Left lung (tissue), 14 donors: ENCODE measurements at regions of chr3 and their contacts with region 1.

Region 1: GRCh38 chr3:177050501-177051237 is 146.6 kb downstream of the TBL1XR1 start:
- DNase-seq: peak in 1 of 4 donors; percentile 61
- ATAC-seq: peak; percentile 84
- H3K4me3 ChIP-seq: no peak overlapping the region
- H3K27ac ChIP-seq: no peak overlapping the region
- H3K4me1 ChIP-seq: peaks cover 0 to 14% of the 10 kb centered on the region in 2 donors
- H3K27me3 ChIP-seq: no peaks in the 10 kb centered on the region
- CTCF ChIP-seq: peak; percentile 40 to 47

Region 2: GRCh38 chr3:176920766-176921160 is 129.9 kb before region 1 on chr3:
- intact Hi-C with region 1: no loop called
- DNase-seq: no peak
- ATAC-seq: peak; percentile 74
- H3K4me3 ChIP-seq: no peak overlapping the region
- H3K27ac ChIP-seq: no peak overlapping the region
- H3K4me1 ChIP-seq: no peaks in the 10 kb centered on the region
- H3K27me3 ChIP-seq: no peaks in the 10 kb centered on the region
- CTCF ChIP-seq: no peak

Region 3: GRCh38 chr3:177197041-177197727 is 146.5 kb after region 1 on chr3 and contains the start of gene TBL1XR1:
- intact Hi-C with region 1: loop called in 1 of 2 experiments (anchors 10 kb)
- DNase-seq: peak; percentile 92 to 96 (median 94)
- ATAC-seq: peak; percentile 76
- H3K4me3 ChIP-seq: peak within 1 kb of the TSS; percentile 72 to 74
- H3K27ac ChIP-seq: peak within 1 kb of the TSS; percentile 95 to 96
- H3K4me1 ChIP-seq: peaks cover 3 to 48% of the 10 kb centered on the region in 2 donors
- H3K27me3 ChIP-seq: no peaks in the 10 kb centered on the region
- CTCF ChIP-seq: no peak
- polyA plus RNA-seq, gene TBL1XR1: 116 to 202 (median 152) TPM